ENCODE measurements at regions of chr4 and their contacts with region 1.

Region 1: GRCh38 chr4:88378691-88379559 is at the start of gene HERC6:
- DNase-seq: peak; percentile 80
- ATAC-seq: peak; percentile 97 to 98
- total RNA-seq, gene HERC6: 6.4 to 9.7 TPM

Region 2: GRCh38 chr4:88225232-88226105 is 153.5 kb before region 1 on chr4:
- intact Hi-C with region 1: loop called in 1 of 2 experiments (anchors 10 kb)
- DNase-seq: no peak
- ATAC-seq: peak in 1 of 2 donors; percentile 45

Region 3: DNA sequence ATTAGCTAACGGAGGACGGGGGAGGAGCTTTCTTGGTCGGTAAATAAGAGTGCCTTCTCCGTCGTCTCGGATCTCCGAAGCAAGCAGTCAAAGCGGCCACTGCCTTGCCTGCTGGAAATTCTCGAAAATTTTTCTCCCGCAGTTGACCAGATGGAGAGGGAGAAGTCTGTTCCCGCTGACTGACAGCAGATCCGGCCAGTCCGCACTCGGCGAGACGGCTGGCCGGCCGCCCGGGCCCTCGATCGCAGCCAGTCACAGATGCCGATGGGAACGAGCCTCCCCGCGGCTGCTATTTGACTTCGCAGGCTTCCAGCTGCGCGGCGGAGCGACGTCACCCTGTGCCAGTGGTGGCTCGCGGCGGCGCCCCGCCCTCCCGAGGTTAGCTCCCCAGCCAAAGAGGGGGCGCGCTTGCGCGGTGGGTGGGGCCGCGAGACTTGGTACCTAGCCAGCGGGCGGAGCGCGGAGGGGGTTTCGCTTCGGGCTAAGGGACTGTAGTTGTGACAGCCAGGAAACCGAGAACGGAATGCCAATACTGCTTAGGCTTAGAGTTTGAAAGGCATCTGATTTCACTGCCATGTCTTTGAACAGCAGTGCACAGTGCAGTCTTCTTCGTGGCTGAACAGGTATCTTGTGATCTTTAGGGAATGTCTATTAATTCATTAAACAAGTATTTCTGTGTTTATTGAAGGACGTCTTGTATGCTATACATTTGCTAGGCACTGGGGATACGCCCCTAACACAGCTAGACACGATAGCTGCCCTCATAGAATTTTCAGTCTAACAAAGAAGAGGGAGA is 94.3 kb before region 1 on chr4 and contains the start of gene PPM1K:
- intact Hi-C with region 1: loop called in 1 of 2 experiments (anchors 5 kb)
- DNase-seq: peak; percentile 100
- ATAC-seq: peak; percentile 97 to 98
- total RNA-seq, gene PPM1K: 61.9 to 126 TPM

Region 4: DNA sequence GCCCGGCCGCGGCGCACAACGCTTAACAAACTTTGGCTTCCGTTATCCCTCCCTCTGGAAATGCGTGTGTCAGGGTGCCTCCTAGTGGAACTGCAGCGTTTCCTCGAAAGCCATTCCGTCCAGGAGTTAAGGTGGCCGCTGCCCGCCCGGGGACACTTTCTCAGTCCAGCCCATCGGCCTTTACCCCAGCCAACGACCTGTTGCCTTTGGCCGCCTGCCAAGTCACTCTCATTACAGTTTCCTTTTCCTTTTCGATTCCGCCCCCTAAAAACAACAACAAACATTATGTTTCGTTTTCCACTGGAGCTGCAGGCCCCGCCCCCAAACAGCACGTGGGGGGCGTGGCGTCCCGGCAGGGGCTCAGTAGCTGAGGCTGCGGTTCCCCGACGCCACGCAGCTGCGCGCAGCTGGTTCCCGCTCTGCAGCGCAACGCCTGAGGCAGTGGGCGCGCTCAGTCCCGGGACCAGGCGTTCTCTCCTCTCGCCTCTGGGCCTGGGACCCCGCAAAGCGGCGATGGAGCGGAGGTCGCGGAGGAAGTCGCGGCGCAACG is 77.9 kb after region 1 on chr4 and contains the start of gene HERC5:
- intact Hi-C with region 1: loop called in 1 of 2 experiments (anchors 10 kb)
- DNase-seq: peak; percentile 96
- ATAC-seq: peak; percentile 94 to 97
- total RNA-seq, gene HERC5: 2.4 to 3.7 TPM

Region 5: GRCh38 chr4:88514557-88515511 is 135.9 kb after region 1 on chr4:
- intact Hi-C with region 1: loop called in 1 of 2 experiments (anchors 5 kb)
- DNase-seq: no peak
- ATAC-seq: no peak

Region 6: GRCh38 chr4:88661739-88662138 is 282.8 kb after region 1 on chr4:
- intact Hi-C with region 1: no loop called
- DNase-seq: no peak
- ATAC-seq: no peak

Region 7: DNA sequence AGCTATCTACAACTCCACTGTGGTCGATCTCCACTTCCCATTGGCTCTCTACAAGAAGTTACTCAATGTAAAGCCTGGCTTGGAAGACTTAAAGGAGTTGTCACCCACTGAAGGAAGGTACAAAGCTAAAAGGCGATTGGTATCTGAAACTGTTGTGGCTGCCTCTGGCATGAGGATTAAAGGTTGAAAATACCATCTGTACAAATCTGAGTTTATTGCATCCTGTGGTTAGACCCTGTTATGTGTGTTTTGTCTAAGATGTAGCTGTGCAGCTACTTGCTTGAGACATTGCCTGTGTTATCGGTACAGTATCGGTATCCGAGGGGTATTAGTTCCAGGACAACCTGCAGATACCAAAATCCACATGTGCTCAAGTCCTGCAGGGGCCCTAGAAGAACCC is 302.3 kb after region 1 on chr4:
- intact Hi-C with region 1: no loop called
- DNase-seq: no peak
- ATAC-seq: no peak